Activated CD4-positive, alpha-beta memory T cell treated with anti-CD3 and anti-CD28 coated beads for 36 hours (primary cell): ENCODE measurements at regions of chrX and their contacts with region 1.

Region 1: DNA sequence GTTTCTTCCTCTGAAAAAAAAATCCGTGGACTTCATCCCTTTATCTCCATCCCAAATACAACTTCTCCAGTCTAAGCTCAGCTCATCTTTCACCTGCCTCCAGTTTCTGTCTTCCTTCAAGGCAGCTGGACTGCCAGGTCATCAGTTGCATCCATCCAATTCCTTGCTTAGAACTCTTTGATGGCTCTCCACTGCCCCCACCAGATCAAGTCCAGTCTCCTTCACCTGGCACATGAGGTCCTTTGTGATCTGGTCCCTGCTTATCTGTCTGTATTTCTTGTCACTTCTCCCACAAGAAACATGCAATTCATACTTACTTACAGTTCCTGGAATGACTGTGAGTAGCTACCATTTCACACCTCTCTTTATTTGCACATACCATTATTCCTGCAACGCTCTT is 33.8 kb downstream of the OTUD6A start:
- DNase-seq: no peak
- H3K4me3 Mint-ChIP-seq: no peak overlapping the region
- H3K27ac Mint-ChIP-seq: no peak overlapping the region
- H3K4me1 Mint-ChIP-seq: no peaks in the 10 kb centered on the region
- H3K27me3 Mint-ChIP-seq: peaks cover 5% of the 10 kb centered on the region

Region 2: DNA sequence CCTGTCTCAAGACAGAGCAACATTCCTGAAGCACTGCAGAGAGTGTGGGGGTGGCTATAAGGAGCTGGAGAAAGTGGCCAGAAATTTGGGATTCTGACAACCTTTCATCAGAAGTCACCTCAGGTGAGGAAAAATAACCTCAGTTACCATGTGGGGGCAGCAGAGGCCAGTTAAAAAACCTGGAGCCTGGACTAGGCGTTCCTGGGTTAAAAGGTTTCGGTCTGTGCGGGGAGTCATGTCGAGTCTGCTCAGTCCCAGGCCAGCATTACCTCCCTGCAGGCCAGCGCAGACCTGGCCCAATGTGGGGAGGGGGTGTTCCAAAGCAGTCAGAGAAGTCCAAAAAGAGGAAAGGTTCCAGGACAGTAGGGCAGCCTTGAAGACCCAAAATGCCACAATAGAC is 602.9 kb before region 1 on chrX:
- CTCF ChIA-PET with region 1: interaction called, 12 read pairs
- POLR2A ChIA-PET with region 1: no interaction called
- intact Hi-C with region 1: loop called (anchors 2 kb)
- DNase-seq: peak; percentile 39
- H3K4me3 Mint-ChIP-seq: no peak overlapping the region
- H3K27ac Mint-ChIP-seq: no peak overlapping the region
- H3K4me1 Mint-ChIP-seq: peaks cover 2% of the 10 kb centered on the region
- H3K27me3 Mint-ChIP-seq: peaks cover 10% of the 10 kb centered on the region

Region 3: DNA sequence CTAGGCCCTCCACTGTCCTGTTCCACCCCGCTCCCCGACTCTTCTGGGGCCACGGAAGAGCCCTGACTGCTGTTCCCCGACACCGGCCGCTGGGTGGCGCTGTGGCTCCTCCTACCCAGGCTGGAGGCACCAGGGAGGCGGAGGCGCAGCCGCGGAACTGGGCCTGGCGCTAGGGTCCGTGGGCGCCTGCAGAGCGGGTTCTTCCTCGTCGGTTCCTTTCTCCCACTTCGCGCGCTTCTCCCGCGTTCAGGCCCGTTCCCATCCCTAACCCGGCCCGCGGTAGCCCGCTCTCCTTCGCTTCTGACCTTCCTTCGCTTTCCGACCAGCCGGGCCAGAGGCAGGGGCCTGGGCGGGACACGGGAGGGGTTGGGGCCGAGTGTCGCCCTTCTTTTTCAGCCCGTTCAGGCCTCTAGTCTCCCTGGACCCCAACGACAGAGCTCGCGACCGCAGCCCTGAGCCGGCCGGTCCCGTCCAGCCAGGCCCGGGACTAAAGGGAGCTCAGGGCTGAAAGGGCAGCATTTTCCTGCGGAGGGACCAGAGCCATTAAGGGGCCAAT is 557.7 kb before region 1 on chrX:
- CTCF ChIA-PET with region 1: interaction called, 33 read pairs
- POLR2A ChIA-PET with region 1: no interaction called
- intact Hi-C with region 1: loop called (anchors 2 kb)
- DNase-seq: peak; percentile 78
- H3K4me3 Mint-ChIP-seq: peak overlapping the region; percentile 35
- H3K27ac Mint-ChIP-seq: no peak overlapping the region
- H3K4me1 Mint-ChIP-seq: peaks cover 17% of the 10 kb centered on the region
- H3K27me3 Mint-ChIP-seq: peaks cover 1% of the 10 kb centered on the region

Region 4: GRCh38 chrX:70030301-70030767 is 65.7 kb before region 1 on chrX:
- CTCF ChIA-PET with region 1: interaction called, 8 read pairs
- POLR2A ChIA-PET with region 1: no interaction called
- intact Hi-C with region 1: loop called (anchors 2 kb)
- DNase-seq: peak; percentile 51
- H3K4me3 Mint-ChIP-seq: no peak overlapping the region
- H3K27ac Mint-ChIP-seq: no peak overlapping the region
- H3K4me1 Mint-ChIP-seq: peaks cover 23% of the 10 kb centered on the region
- H3K27me3 Mint-ChIP-seq: no peaks in the 10 kb centered on the region

Region 5: GRCh38 chrX:70231666-70232065 is 135.6 kb after region 1 on chrX:
- CTCF ChIA-PET with region 1: no interaction called
- POLR2A ChIA-PET with region 1: no interaction called
- intact Hi-C with region 1: no loop called
- DNase-seq: no peak
- H3K4me3 Mint-ChIP-seq: no peak overlapping the region
- H3K27ac Mint-ChIP-seq: no peak overlapping the region
- H3K4me1 Mint-ChIP-seq: peaks cover 12% of the 10 kb centered on the region
- H3K27me3 Mint-ChIP-seq: no peaks in the 10 kb centered on the region

Region 6: DNA sequence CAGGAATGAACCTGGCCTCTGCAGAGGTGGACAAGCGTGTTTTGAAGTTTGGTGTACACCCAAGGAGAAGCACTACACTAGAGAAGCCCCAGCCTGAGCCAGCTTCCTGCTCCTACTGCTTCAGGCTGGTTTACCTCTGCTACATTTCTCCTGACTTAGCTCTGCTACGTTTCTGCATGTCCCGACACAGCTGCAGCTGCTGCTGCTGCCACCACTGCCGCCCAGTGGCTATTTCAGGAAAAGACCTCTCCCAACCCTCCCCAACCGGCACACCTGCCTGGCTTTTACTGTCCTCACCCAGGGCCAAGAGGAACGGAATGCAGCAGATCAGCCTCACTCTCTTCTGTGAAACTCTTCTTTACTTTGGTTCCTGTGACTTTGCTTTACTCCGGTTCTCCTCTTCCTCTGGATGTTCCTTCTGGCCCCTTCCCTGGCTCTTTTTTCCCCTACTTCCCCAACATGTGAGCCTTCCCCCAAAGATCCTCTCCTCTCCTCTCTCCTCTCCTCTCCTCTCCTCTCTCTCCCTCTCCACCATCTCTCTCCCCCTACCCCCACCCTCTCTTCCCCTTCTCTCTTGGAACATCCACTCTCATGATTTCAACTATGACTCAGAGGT is 167.0 kb after region 1 on chrX:
- CTCF ChIA-PET with region 1: no interaction called
- POLR2A ChIA-PET with region 1: no interaction called
- intact Hi-C with region 1: no loop called
- DNase-seq: peak; percentile 50
- H3K4me3 Mint-ChIP-seq: no peak overlapping the region
- H3K27ac Mint-ChIP-seq: no peak overlapping the region
- H3K4me1 Mint-ChIP-seq: no peaks in the 10 kb centered on the region
- H3K27me3 Mint-ChIP-seq: no peaks in the 10 kb centered on the region